CD14-positive monocyte (primary cell): ENCODE measurements at regions of chr1 and their contacts with region 1.

Region 1: DNA sequence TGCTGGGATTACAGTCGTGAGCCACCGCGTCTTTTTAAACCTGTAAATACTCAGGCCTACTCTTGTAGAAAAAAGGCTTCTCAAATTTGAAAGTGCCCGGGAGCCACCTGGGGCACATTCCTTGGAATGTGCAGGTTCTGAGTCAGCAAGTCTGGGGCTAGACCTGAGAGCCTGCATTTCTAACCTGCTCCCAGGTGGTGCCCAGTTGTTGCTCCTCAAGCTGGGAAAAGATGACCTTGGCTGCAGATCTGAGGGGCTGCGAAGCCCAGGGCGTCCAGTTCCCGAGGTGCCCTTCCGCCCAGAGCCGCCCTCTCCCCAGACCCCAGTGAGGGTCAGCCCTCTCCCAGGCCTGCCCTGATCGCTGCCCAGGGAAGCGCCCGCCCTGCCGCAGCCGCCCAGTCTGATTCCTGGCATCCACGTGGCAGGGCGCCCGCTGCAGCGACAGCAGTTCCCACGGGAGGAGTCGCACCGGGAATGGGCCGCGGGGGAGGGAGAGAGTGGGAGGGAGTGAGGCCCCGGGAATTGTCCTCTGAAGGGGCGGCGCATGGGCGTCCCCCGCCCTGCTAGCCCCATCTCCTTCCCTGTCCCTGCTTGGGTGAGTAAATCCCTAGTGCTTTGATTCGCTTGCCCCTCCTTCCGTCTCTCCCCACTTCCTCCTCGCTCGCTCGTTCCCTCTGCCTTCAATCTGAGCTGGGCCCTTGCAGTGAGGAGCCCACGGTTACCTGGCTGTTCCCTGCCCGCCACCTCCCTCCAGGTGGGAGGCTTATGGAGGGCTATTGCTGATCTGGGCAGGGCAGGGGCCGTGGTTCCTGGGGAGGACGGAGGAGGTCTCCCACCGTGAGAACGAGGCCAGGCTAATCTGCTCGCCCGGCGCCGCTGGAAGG is 18.8 kb upstream of the TENT5B start:
- DNase-seq: peak; percentile 30 to 49 (median 49)
- H3K4me3 ChIP-seq: peak overlapping the region; percentile 20 to 70 (median 23)
- H3K4me3 Mint-ChIP-seq: peak overlapping the region; percentile 64 to 68
- H3K27ac ChIP-seq: no peak overlapping the region
- H3K27ac Mint-ChIP-seq: peak overlapping the region in 1 of 7 donors; percentile 13
- H3K4me1 ChIP-seq: peaks cover 9 to 10% of the 10 kb centered on the region in 2 donors
- H3K4me1 Mint-ChIP-seq: peaks cover 10% of the 10 kb centered on the region
- H3K27me3 ChIP-seq: no peaks in the 10 kb centered on the region
- H3K27me3 Mint-ChIP-seq: peaks cover 0 to 11% (median 2%) of the 10 kb centered on the region in 3 donors
- CTCF ChIP-seq: no peak

Region 2: DNA sequence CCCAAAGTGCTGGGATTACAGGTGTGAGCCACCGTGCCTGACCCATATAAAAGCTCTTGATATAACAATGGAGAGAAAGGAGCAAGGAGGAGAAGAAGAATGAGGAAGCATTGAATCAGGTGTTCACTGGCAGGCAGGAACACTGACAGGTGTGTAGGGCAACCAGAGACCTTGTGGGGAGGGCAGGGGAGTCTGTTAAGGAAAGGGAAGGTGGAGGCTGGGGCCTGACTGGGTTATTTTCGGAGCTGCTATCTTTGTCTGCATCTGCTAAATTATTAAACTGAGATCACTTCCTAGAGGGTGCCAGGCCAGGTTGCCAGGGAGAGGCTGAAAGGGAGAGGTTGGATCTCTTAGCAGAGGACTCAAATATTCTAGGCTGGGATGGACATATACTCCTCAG is 44.8 kb before region 1 on chr1:
- intact Hi-C with region 1: loop called in 1 of 2 experiments (anchors 5 kb)
- DNase-seq: no peak
- H3K4me3 ChIP-seq: no peak overlapping the region
- H3K4me3 Mint-ChIP-seq: peak overlapping the region in 1 of 2 donors; percentile 58
- H3K27ac ChIP-seq: no peak overlapping the region
- H3K27ac Mint-ChIP-seq: no peak overlapping the region
- H3K4me1 ChIP-seq: peaks cover 11 to 13% of the 10 kb centered on the region in 2 donors
- H3K4me1 Mint-ChIP-seq: peaks cover 19% of the 10 kb centered on the region
- H3K27me3 ChIP-seq: peaks cover 4 to 18% of the 10 kb centered on the region in 2 donors
- H3K27me3 Mint-ChIP-seq: peaks cover 30 to 43% (median 35%) of the 10 kb centered on the region in 3 donors
- CTCF ChIP-seq: no peak

Region 3: DNA sequence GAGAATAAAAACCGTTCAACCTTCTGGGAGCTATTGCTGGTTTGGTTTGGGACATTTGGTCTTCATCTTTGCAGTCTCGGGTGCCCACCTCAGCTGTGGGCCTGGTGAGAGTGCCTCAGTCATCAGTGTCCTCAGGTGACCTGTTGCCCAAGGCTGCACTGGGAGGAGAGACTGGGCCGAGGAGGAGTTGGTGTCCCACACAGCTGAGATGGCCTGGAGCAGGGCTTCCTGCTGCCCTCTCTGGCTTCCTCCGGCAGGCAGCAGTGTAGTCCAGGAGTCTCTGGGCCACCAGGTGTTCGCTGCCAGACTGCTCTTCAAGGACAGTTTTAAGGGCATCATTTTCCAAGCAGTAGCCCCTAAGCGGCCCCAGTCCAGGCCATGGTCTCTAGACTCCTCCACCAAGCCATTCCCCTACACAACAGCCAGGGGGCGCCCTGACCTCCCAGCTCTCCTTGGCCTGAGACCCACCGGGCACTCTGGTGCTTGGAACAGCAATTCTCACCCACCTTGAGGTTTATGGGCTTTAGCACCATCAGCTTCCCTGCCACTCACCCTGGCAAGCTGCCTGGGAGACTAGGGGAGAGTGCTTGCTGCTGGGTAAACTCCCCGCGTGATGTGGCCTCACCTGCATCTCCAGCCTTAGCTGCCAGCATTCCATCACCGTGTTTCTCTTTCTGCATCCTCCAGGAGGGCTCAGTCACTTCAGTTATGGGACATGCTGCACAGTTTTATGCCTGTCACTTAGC is 301.2 kb after region 1 on chr1:
- intact Hi-C with region 1: no loop called
- DNase-seq: peak in 2 of 3 donors; percentile 38 to 49
- H3K4me3 ChIP-seq: no peak overlapping the region
- H3K4me3 Mint-ChIP-seq: no peak overlapping the region
- H3K27ac ChIP-seq: peak overlapping the region in 1 of 2 donors; percentile 48
- H3K27ac Mint-ChIP-seq: peak overlapping the region in 1 of 7 donors; percentile 66
- H3K4me1 ChIP-seq: peaks cover 4 to 6% of the 10 kb centered on the region in 2 donors
- H3K4me1 Mint-ChIP-seq: peaks cover 7% of the 10 kb centered on the region
- H3K27me3 ChIP-seq: no peaks in the 10 kb centered on the region
- H3K27me3 Mint-ChIP-seq: peaks cover 0 to 3% (median 2%) of the 10 kb centered on the region in 3 donors
- CTCF ChIP-seq: peak; percentile 93